Activated CD4-positive, alpha-beta T cell treated with anti-CD3 and anti-CD28 coated beads for 36 hours (primary cell): ENCODE measurements at regions of chr14 and their contacts with region 1.

Region 1: DNA sequence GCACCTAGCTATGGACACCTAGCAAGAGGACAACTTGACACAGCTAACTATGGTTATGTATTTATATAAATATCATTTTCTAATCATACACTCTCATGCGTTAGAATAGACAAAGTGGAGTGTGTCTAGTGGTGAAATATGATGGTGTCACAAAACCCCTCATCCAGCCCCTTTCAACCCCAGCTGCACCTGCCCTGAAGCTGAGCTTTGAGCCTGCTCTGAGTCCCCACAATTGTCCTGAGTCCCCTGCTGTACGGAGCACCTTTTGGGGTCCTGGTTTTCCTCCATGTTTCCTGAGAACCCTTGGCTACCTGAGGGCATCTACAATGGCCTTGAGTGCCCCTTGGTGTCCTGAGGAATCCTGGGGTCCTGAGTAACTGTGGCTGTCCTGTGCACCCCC is 1072.8 kb downstream of the TMEM121 start:
- DNase-seq: no peak
- ATAC-seq: no peak
- H3K4me3 Mint-ChIP-seq: no peak overlapping the region
- H3K27ac Mint-ChIP-seq: no peak overlapping the region
- H3K4me1 Mint-ChIP-seq: no peaks in the 10 kb centered on the region
- H3K27me3 Mint-ChIP-seq: peaks cover 47% of the 10 kb centered on the region

Region 2: DNA sequence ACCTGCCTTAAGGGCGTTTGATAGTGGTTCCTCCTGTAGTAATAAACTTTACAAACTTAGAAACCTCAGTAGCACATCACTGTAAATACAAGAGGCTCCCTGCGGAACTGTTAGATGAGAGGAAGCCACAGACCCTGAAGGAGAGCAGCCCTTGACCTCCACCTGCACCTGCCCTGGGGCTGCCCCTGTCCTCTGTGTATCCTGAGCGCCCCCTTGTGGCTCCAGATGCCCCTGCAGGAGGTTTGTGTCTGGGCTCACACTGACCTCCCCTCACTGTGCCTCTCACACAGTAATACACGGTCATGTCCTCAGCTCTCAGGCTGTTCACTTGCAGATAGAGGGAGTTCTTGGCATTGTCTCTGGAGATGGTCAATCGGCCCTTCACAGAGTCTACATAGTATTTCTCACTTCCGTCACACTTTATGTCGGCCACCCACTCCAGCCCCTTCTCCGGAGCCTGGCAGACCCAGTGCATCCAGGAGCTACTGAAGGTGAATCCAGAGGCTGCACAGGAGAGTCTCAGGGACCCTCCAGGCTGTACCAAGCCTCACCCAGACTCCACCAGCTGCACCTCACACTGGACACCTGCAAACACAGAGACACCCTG is 13.0 kb before region 1 on chr14:
- CTCF ChIA-PET with region 1: interaction called, 10 read pairs
- POLR2A ChIA-PET with region 1: no interaction called
- intact Hi-C with region 1: no loop called
- DNase-seq: peak; percentile 86
- ATAC-seq: peak; percentile 97
- H3K4me3 Mint-ChIP-seq: no peak overlapping the region
- H3K27ac Mint-ChIP-seq: no peak overlapping the region
- H3K4me1 Mint-ChIP-seq: peaks cover 1% of the 10 kb centered on the region
- H3K27me3 Mint-ChIP-seq: peaks cover 7% of the 10 kb centered on the region